ENCODE measurements at regions of chr6 and their contacts with region 1.

Region 1: GRCh38 chr6:26270903-26271667 is 93.9 kb upstream of the BTN3A2 start:
- DNase-seq: peak in 1 of 2 donors; percentile 63
- ATAC-seq: peak; percentile 28 to 71 (median 64)
- H3K4me3 ChIP-seq: peak overlapping the region; percentile 58
- H3K27ac ChIP-seq: no peak overlapping the region
- H3K4me1 ChIP-seq: peaks cover 8% of the 10 kb centered on the region
- H3K27me3 ChIP-seq: peaks cover 0 to 67% (median 28%) of the 10 kb centered on the region in 3 donors
- CTCF ChIP-seq: no peak

Region 2: GRCh38 chr6:25829375-25829774 is 441.7 kb before region 1 on chr6:
- intact Hi-C with region 1: no loop called
- DNase-seq: no peak
- ATAC-seq: no peak
- H3K4me3 ChIP-seq: no peak overlapping the region
- H3K27ac ChIP-seq: no peak overlapping the region
- H3K4me1 ChIP-seq: no peaks in the 10 kb centered on the region
- H3K27me3 ChIP-seq: peaks cover 0 to 13% (median 2%) of the 10 kb centered on the region in 3 donors
- CTCF ChIP-seq: no peak

Region 3: DNA sequence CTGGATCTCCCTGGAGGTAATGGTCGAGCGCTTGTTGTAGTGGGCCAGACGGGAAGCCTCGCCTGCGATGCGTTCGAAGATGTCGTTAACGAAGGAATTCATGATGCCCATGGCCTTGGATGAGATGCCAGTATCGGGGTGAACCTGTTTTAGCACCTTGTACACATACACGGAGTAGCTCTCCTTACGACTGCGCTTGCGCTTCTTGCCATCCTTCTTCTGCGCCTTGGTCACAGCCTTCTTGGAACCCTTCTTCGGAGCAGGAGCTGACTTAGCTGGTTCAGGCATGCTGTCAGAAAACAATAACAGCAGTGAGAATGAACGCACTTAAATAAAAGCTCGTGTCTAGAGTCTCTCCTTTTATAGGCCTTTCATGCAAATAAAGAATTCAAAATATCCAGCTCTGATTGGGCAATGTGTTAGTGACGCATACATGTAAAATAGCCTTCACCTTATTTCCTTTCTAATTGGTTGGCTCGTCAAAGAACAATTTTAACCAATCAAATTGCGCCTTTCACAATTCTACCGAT is 54.7 kb before region 1 on chr6:
- intact Hi-C with region 1: no loop called
- DNase-seq: peak in 1 of 2 donors; percentile 64
- ATAC-seq: peak; percentile 43 to 81 (median 80)
- H3K4me3 ChIP-seq: peak overlapping the region; percentile 67
- H3K27ac ChIP-seq: peak overlapping the region; percentile 82
- H3K4me1 ChIP-seq: peaks cover 5% of the 10 kb centered on the region
- H3K27me3 ChIP-seq: peaks cover 0 to 72% (median 28%) of the 10 kb centered on the region in 3 donors
- CTCF ChIP-seq: no peak

Region 4: GRCh38 chr6:26234421-26235296 is 36.4 kb before region 1 on chr6:
- intact Hi-C with region 1: loop called in 1 of 2 experiments (anchors 5 kb)
- DNase-seq: peak in 1 of 2 donors; percentile 64
- ATAC-seq: peak; percentile 55 to 67 (median 58)
- H3K4me3 ChIP-seq: peak overlapping the region; percentile 64
- H3K27ac ChIP-seq: peak overlapping the region; percentile 51
- H3K4me1 ChIP-seq: peaks cover 19% of the 10 kb centered on the region
- H3K27me3 ChIP-seq: peaks cover 0 to 94% (median 18%) of the 10 kb centered on the region in 3 donors
- CTCF ChIP-seq: no peak